Esophagus muscularis mucosa (tissue), 4 donors: ENCODE measurements at regions of chr3 and their contacts with region 1.

Region 1: DNA sequence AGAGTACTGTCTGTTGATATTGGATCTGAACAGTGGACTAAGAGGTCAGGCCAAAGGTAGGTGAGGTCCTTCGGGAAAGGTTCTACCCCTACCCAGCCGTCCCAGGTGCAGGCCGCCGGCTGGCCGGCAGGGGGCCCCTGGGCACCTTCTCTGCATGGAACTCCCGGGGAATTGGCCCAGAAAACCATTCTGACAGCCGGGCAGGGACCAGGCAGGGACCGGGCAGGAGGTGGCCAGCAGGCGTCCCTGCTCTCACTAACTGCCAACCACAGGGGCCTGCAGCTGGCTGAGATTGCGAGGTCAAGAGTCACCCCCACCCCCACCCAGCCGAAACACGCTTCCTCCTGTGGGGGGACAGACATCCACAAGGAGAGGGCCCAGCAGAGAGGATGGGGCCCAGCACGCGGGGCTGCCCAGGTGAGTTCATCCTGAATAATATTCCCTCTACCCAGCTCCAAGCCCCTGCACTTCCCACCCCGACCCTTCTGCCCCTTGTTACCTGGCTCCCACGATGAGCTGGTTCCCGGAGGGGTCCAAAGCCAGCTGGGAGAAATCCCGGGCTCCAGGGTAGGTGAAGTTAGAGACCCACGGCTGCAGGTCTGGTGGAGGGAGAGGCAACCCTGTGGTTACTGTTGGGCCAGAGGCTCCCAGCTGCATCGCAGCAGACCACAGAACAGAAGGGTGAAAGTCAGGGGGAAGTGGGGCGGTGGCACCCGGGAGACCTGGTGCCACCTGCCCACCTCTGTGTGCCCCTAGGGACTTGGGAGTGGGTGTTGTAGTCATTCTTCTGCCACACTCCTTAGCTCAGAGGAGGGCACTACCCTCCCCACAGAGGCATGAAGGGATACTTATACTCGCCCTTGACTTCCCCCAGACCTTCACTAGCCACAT is 84.4 kb downstream of the SEMA5B start:
- DNase-seq: no peak
- H3K4me3 ChIP-seq: no peak overlapping the region
- H3K27ac ChIP-seq: no peak overlapping the region
- H3K4me1 ChIP-seq: peaks cover 5 to 33% (median 16%) of the 10 kb centered on the region in 4 donors
- H3K27me3 ChIP-seq: no peaks in the 10 kb centered on the region
- CTCF ChIP-seq: peak; percentile 82 to 95 (median 89)
- EP300 ChIP-seq: no peak
- POLR2A ChIP-seq: no peak

Region 2: GRCh38 chr3:123027292-123028232 is 84.4 kb after region 1 on chr3 and contains the start of gene SEMA5B:
- intact Hi-C with region 1: loop called (anchors 2 kb)
- DNase-seq: no peak
- H3K4me3 ChIP-seq: peak within 1 kb of the TSS; percentile 56 to 64 (median 62)
- H3K27ac ChIP-seq: peak within 1 kb of the TSS in 1 of 4 donors; percentile 49
- H3K4me1 ChIP-seq: peaks cover 31 to 35% (median 34%) of the 10 kb centered on the region in 4 donors
- H3K27me3 ChIP-seq: peaks cover 0 to 62% (median 12%) of the 10 kb centered on the region in 4 donors
- CTCF ChIP-seq: peak; percentile 32 to 52 (median 51)
- EP300 ChIP-seq: no peak
- POLR2A ChIP-seq: no peak
- total RNA-seq, gene SEMA5B: under 0.01 to 1.6 (median 0.34) TPM

Region 3: DNA sequence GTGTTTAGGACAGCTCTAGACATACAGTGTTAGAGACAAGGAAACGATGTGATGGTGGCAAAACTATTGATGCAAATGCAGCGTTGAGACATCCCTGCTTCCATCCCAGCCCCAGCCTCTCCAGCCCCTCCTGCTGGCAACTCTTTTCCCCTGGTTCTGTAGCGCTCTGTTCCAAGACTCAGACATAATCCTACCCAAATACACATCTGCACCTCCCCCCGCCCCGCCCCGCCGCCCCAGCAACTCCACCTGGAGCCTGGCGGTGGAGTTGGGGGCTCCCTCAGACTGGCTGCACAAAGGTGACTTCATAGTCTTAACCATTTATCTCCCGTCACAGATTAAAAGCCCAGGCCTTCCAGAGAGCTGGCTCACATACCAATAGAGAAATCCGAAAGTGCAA is 251.4 kb after region 1 on chr3:
- intact Hi-C with region 1: loop called (anchors 5 kb)
- DNase-seq: no peak
- H3K4me3 ChIP-seq: no peak overlapping the region
- H3K27ac ChIP-seq: no peak overlapping the region
- H3K4me1 ChIP-seq: no peaks in the 10 kb centered on the region
- H3K27me3 ChIP-seq: no peaks in the 10 kb centered on the region
- CTCF ChIP-seq: peak; percentile 30 to 60 (median 44)
- EP300 ChIP-seq: no peak
- POLR2A ChIP-seq: no peak

Region 4: DNA sequence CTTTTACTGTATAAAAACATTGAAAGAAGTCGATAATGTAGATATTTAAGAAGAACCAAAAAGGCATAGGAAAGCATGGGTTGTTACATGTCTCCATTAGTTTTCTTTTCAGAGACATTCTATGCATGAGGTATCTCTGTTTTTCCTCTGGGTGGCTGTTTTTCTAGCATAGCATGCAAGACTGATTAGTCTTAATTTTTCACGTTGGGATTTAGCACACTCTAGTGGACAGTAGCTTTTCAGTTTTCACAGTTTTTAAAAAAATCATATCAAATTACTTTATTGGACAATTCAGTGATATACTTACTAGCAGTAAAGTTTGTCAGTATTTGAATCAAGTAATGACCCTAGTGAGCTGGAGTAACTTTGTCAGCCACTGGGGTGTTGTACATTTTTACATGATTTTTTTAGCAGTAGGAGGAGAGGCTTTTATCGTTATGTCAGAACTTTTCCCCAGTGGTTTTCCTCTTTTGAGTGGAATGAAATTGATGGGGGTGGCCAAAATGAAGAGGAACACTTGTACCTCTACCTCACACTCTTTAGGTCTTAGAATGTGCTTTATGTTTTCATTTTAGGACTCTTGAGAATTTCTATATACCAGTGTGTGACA is 315.7 kb after region 1 on chr3:
- intact Hi-C with region 1: loop called (anchors 10 kb)
- DNase-seq: no peak
- H3K4me3 ChIP-seq: no peak overlapping the region
- H3K27ac ChIP-seq: no peak overlapping the region
- H3K4me1 ChIP-seq: peaks cover 0 to 5% (median 0%) of the 10 kb centered on the region in 4 donors
- H3K27me3 ChIP-seq: no peaks in the 10 kb centered on the region
- CTCF ChIP-seq: peak; percentile 47 to 56 (median 47)
- EP300 ChIP-seq: no peak
- POLR2A ChIP-seq: no peak

Region 5: DNA sequence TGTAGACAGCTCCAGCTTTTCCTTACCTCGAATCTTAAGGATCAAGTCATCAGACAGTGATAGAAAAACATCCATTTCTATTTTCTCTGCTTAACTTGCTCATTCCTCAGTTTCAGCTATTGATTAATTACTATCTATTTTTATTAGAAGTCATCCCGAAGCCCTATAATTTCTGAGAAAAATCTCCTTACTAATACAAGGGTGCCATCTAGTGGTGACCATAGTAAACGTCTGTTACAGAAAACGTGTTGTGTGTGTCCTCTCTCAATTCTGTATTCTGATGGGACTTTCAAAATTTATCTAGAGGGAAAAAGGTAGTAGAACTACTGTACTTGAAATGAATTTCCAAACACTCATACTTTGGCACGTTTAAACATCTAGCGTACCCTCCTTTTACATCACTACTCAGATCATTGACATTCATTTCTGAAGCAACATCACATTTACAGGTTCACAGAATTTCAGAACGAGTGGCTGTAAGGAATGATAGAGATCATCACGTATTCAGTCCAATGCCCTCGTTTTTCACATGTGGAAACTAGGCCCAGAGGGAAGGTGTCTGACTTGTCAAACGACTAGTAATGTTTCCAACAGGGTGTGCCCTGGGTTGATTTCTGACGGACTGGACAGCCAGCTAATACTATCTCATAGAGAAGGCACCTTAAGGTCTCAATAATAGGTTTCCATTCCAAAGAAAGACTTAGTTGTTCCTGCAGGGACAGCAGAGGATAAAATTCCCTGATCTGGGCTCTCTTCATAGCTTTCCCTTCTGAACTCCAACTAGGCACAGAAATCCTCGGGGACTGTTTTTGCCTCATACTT is 616.1 kb after region 1 on chr3:
- intact Hi-C with region 1: loop called (anchors 10 kb)
- DNase-seq: no peak
- H3K4me3 ChIP-seq: no peak overlapping the region
- H3K27ac ChIP-seq: no peak overlapping the region
- H3K4me1 ChIP-seq: peaks cover 0 to 17% (median 5%) of the 10 kb centered on the region in 4 donors
- H3K27me3 ChIP-seq: no peaks in the 10 kb centered on the region
- CTCF ChIP-seq: peak; percentile 73 to 79 (median 74)
- EP300 ChIP-seq: no peak
- POLR2A ChIP-seq: no peak